Motor neuron (in vitro differentiated cells): ENCODE measurements at regions of chr18 and their contacts with region 1.

Region 1: GRCh38 chr18:76686737-76687262 is 135.6 kb upstream of the ZNF236 start:
- ATAC-seq: peak; percentile 67 to 87 (median 74)
- H3K4me3 ChIP-seq: peak overlapping the region in 1 of 5 donors; percentile 6
- H3K27ac ChIP-seq: peak overlapping the region; percentile 11 to 22
- H3K4me1 ChIP-seq: peaks cover 31 to 44% of the 10 kb centered on the region in 2 donors

Region 2: DNA sequence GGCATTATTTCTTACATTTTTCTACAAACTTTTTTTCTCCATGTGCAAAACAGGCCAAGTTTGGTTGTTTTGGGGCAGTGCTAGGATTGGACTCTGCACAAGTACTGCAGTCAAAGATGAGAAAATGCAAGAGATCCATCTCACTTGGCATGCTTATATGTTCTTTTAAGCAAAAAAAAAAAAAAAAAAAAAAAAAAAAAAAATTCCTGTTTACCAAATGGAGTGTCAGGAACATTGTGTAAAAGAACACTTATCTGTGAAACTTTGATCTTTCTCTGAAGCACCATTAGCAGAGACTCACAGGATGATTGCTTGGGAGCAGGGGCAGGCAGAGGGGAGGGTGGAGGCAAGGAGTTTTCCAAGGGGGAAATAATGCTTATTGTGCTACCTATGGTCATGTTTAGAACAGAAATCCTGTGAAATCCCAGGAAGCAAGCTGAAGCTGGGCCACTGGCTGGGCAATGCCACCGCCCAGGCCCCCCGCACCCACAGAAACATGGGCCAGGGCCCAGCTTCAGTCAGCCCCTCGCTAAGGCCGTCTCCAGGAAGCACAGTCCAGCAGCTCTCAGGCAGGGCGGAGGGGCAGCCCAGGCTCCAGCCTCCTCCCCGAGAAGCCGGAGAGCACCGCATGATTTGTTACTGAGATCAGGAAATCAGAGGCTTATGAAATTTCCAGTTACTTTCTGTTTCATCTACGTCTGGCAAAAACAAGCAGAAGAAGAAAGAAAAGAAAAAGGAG is 421.1 kb before region 1 on chr18:
- in situ Hi-C with region 1: no loop called
- ATAC-seq: peak in 4 of 8 experiments; percentile 29 to 99 (median 76)
- H3K4me3 ChIP-seq: no peak overlapping the region
- H3K27ac ChIP-seq: no peak overlapping the region
- H3K4me1 ChIP-seq: peaks cover 48 to 53% of the 10 kb centered on the region in 2 donors

Region 3: DNA sequence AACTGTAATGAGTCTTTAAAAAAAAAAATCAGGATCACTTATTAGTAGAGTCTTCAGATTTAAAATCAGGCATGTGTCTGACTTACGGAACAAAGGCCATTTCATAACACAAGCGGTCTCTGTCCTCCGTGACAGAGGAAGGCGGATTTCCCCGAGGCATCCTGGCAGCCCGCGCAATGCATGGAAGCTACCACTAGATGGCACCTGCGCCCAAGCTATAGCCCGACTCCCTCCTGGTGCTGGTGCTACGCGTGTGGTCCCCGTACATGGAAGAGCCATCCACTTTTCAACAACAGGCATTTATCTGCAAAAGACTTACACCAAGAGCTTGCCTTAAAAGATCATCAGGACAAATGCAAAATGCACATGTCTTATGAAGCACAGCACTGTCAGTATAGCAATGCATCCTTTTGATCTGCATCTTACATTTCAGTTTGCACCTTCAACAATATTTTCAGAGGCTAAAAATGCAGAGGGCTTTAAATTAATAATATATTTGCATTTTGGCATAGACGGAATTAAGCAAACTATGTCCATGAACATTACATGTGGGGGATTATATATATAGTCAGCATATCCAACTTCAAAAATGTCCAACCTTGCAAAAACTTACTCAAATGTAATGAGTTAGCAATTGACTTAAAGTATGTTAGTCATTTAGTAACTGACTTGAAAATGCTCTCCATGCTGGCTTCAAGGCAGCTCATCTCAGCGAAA is 287.7 kb before region 1 on chr18:
- in situ Hi-C with region 1: loop called in 4 of 9 experiments (anchors 25 kb)
- ATAC-seq: peak; percentile 79 to 95 (median 92)
- H3K4me3 ChIP-seq: no peak overlapping the region
- H3K27ac ChIP-seq: no peak overlapping the region
- H3K4me1 ChIP-seq: peaks cover 19 to 22% of the 10 kb centered on the region in 2 donors

Region 4: DNA sequence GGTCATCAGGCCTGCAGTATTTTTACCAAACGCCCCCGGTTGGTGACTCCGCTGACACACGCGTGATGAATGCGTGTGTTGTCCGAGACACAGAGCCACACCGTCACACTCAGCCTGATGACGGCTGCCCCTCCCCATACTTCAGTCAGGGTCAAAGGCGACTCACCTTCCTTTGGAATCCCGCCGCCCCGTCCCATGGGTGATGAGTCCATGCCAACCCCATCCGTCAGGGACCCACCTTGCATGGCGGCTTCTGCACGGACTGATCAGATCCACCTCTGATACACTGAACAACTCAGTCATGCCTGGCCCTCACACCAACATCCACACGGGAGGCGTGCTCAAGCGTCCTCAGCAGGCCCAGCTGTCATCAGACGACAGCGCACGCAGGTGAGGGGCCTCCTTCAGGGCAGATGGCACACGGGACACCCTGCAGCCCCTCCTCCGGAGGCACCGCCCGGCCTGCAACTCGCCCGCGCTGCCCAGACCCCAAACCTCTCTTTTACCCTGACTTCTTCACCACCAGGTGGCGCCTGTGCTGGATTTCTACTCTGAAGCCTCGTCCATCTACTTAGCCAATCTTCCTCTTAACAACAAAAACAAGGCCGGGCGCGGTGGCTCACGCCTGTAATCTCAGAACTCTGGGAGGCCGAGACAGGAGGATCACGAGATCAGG is 281.0 kb before region 1 on chr18:
- in situ Hi-C with region 1: loop called in 2 of 9 experiments (anchors 25 kb)
- ATAC-seq: peak in 4 of 8 experiments; percentile 29 to 88 (median 62)
- H3K4me3 ChIP-seq: no peak overlapping the region
- H3K27ac ChIP-seq: no peak overlapping the region
- H3K4me1 ChIP-seq: no peaks in the 10 kb centered on the region

Region 5: DNA sequence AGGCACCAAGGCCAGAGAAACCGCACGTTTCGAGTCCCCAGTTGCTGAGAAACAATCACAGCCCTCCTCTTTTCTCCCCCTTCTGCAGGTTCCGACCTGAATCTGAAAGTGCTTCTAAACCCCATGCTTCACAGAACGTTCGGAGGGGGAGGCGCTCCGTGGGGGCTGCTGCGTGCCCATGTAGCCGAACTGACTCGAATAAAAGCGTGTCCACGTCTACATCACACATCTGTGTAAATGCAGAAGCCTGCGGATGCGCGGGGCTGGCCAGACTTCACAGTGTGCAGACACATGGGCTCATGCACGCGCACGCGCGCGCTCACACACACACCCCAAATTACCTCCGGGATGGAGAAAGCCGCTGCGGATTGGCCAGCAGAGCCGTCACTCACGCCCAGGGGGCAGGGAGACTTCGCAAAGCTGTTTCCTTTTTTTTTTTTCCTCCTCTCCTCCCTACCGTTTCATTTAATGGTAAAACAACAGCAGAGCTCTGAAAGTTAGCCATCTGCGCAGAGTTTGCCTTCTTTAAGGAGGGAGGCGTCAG is 194.1 kb before region 1 on chr18:
- in situ Hi-C with region 1: loop called in 1 of 9 experiments (anchors 25 kb)
- ATAC-seq: peak; percentile 54 to 66 (median 58)
- H3K4me3 ChIP-seq: peak overlapping the region; percentile 42 to 86 (median 64)
- H3K27ac ChIP-seq: peak overlapping the region; percentile 84 to 91
- H3K4me1 ChIP-seq: peaks cover 14 to 36% of the 10 kb centered on the region in 2 donors